ENCODE measurements at regions of chr11 and their contacts with region 1.

Region 1: DNA sequence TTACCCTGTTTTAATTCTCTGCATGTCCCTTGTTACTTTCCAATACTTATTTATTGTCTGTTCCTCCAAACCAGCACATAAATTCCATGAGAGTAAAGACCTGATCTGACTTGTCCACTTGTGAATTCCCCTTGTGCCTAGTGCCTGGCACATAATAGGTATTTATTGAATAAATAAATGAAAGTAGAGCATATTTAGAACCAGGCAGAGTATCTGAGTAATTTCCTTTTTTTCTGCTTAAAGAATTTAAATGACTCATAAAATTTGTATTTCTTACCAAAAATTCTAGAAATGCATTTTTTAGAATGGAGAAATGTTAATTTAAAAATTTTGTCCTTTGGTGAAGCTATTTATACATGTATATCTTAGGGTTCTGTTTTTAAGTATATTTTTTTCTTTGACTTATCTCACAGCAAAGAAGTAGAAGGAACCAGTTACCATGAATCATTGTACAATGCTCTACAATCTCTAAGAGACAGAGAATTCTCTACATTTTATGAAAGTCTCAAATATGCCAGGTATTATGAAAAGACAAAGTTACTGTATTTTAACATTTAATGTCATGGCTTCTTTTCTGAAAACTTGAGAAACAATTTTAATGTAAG is 96.8 kb downstream of the ATM start:
- DNase-seq: no peak
- ATAC-seq: no peak
- H3K4me3 ChIP-seq: no peak overlapping the region
- H3K27ac ChIP-seq: no peak overlapping the region
- H3K4me1 ChIP-seq: peaks cover 0 to 7% (median 0%) of the 10 kb centered on the region in 12 donors
- H3K27me3 ChIP-seq: no peaks in the 10 kb centered on the region
- CTCF ChIP-seq: no peak
- POLR2A ChIP-seq: no peak

Region 2: GRCh38 chr11:108253176-108253575 is 66.5 kb before region 1 on chr11:
- intact Hi-C with region 1: loop called in 1 of 10 experiments (anchors 10 kb)
- DNase-seq: no peak
- ATAC-seq: no peak
- H3K4me3 ChIP-seq: no peak overlapping the region
- H3K27ac ChIP-seq: no peak overlapping the region
- H3K4me1 ChIP-seq: no peaks in the 10 kb centered on the region
- H3K27me3 ChIP-seq: no peaks in the 10 kb centered on the region
- CTCF ChIP-seq: no peak
- POLR2A ChIP-seq: no peak

Region 3: GRCh38 chr11:108302121-108302785 is 17.4 kb before region 1 on chr11:
- intact Hi-C with region 1: no loop called
- DNase-seq: no peak
- ATAC-seq: no peak
- H3K4me3 ChIP-seq: no peak overlapping the region
- H3K27ac ChIP-seq: no peak overlapping the region
- H3K4me1 ChIP-seq: no peaks in the 10 kb centered on the region
- H3K27me3 ChIP-seq: no peaks in the 10 kb centered on the region
- CTCF ChIP-seq: no peak
- POLR2A ChIP-seq: no peak